ENCODE measurements at regions of chr16 and their contacts with region 1.

Region 1: DNA sequence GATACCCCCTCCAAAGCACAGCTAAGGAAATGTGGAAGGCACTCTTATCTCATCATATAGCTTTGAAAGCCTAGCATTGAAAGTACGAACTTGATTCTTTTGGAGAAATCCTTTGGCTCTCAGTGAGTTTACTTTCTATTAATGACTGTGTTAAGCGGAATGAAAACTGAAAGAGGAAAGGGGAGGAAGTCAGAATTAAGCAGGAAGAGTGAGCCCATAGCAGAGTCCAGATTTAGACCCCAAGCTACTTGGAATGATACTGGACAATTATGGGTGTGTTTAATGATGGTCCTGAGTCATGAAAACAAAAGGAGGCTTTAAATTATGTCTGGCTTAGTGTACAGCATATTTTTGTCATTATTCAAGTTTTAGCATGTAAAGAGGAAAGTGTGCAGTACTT is 42.2 kb downstream of the TENT4B start:
- DNase-seq: no peak
- H3K4me3 Mint-ChIP-seq: no peak overlapping the region
- H3K27ac Mint-ChIP-seq: no peak overlapping the region
- H3K4me1 Mint-ChIP-seq: peaks cover 31% of the 10 kb centered on the region
- H3K27me3 Mint-ChIP-seq: no peaks in the 10 kb centered on the region

Region 2: DNA sequence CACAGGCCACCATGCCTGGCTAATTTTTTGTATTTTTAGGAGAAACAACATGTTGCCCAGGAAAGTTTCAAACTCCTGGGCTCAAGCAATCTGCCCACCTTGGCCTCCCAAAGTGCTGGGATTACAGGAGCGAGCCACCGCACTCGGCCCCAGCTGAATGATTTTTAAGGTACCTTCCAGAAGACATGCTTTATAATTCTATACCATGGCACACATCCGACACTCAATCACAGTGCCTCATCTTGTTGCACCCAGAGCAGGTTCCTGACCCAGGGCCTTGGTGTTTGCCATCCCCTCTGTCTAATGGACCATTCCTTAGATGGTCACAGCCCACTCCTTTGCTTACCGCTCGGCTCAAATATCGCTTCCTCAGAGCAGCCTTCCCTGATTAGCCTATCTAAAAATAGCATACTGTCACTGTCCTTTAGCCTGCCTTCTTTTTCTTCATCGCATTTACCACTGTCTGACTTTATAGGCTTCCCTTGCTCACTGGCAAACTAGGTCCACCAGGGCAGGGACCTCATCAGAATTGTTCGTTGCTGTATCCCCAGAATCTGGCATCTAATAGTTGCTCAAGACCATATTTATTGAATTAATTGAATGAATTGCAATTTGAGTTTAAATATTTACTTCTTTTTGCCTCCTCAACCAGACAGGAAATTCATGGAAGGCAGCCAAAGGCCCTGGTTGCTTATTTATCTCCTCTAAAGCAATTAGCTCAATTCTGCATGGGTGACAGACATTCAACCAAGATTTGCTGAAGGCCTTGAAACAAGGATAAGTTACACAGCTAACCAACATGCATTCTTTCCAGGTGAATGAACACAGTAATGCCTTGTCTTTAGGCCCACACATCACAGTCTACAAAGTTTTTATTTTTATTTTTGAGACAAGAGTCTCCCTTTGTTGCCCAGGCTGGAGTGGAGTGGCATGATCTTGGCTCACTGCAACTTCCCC is 48.5 kb before region 1 on chr16:
- intact Hi-C with region 1: no loop called
- DNase-seq: no peak
- H3K4me3 Mint-ChIP-seq: no peak overlapping the region
- H3K27ac Mint-ChIP-seq: no peak overlapping the region
- H3K4me1 Mint-ChIP-seq: peaks cover 3% of the 10 kb centered on the region
- H3K27me3 Mint-ChIP-seq: no peaks in the 10 kb centered on the region

Region 3: DNA sequence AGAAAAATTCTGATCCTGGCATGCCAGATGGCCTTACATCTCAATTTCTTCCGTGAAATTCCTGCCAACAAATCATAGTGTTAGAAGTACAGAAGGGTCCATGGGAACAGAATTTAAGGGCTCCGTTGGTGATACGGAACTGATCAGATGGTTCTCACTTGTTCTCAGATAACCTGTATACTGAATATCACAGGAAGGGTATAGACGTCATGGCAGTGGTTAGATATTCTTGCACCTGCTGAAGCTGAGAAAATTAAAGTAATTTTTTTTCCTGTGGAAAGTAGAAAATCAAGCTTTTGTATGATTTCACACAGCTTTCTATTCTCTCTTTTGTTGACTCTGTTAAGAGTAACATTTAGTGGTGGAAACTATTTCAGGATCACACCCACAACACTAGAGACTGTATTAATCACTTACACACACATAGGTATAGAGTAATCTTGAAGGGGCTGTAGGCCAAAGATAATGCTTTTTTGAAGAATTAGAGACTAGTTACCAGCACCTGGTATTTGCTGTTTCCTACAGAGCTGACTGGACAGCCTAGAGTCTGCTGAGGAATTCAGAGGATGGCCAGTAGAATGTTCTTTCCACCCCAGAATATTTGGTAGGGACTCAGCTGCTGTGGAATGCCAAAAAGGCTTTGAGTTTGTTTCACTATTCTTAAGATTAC is 34.6 kb before region 1 on chr16:
- intact Hi-C with region 1: loop called (anchors 5 kb)
- DNase-seq: no peak
- H3K4me3 Mint-ChIP-seq: no peak overlapping the region
- H3K27ac Mint-ChIP-seq: peak overlapping the region; percentile 25
- H3K4me1 Mint-ChIP-seq: peaks cover 41% of the 10 kb centered on the region
- H3K27me3 Mint-ChIP-seq: no peaks in the 10 kb centered on the region

Region 4: DNA sequence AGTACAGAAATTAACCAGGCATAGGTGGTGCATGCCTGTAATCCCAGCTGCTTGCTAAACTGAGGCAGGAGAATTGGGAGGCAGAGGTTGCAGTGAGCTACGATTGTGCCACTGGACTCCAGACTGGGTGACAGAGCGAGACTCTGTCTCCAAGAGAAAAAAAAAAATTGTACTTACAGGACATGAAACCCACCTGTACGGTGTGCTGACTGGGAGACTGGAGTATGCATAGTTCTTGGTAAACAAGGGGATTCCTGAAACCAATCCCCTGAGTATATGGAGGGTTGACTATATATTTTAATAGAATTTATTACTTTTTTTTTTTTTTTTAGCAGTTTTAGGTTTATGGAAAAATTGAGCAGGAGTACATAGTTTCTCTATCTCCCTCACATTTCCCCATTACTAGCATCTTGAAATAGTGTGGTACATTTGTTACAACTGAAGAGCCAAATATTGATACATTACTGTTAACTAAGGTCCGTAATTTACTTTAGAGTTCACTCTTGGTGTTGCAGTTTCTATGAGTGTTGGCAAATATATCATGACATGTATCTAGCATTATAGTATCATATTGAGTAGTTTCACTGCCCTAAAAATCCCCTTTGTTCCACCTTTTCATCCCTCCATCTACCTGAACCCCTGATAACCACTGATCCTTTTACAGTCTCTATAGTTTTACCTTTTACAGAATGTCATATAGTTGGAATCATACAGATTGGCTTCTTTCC is 22.9 kb before region 1 on chr16:
- intact Hi-C with region 1: no loop called
- DNase-seq: no peak
- H3K4me3 Mint-ChIP-seq: no peak overlapping the region
- H3K27ac Mint-ChIP-seq: no peak overlapping the region
- H3K4me1 Mint-ChIP-seq: peaks cover 50% of the 10 kb centered on the region
- H3K27me3 Mint-ChIP-seq: no peaks in the 10 kb centered on the region

Region 5: DNA sequence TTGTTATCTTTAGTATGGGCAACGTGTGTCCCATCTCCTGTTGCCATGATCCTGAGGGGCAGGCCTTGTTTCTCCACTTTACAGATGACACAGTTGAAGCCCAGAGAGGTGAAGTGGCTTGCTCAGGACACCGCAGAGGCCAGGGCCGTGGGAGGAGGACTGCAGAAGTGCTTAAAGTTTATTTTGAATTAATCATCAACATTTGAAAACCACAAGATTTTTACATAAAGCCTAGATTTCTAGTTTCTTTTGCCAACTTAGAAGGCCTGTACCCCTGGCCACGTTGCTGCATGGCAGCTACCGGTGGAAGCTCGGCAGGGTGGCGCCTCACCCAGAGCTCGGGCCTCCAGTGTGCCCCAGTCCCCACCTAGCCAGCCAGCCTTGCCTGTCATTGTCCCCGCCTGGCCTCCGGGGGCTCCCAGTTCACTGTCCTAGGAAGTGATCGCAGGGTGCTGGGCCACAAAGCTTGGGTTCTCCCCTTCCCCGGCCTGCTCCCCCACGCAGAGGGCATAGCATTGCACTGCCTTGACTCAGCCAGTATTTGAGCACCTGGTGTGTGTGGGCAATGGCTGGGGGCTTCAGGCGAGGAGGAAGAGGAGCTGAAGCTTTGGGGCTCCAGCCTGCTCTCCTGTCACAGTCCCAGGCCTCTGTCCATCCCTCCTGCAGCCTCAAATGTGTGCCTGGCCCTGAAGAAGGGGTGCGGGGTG is 56.3 kb after region 1 on chr16:
- intact Hi-C with region 1: no loop called
- DNase-seq: no peak
- H3K4me3 Mint-ChIP-seq: no peak overlapping the region
- H3K27ac Mint-ChIP-seq: no peak overlapping the region
- H3K4me1 Mint-ChIP-seq: peaks cover 11% of the 10 kb centered on the region
- H3K27me3 Mint-ChIP-seq: peaks cover 15% of the 10 kb centered on the region

Measured in activated T-helper 2 cell treated with anti-CD3 and anti-CD28 coated beads, Interferon-gamma antibody, Interleukin-2, Interleukin-4, amounts not matched to agents 10 μg/mL and 5 μg/mL and 100 μg/mL, durations not matched to agents 14 hours and 24 hours and 36 hours (primary cell).